Right ventricle myocardium superior (tissue), 1 donor: ENCODE measurements at regions of chr5 and their contacts with region 1.

Region 1: DNA sequence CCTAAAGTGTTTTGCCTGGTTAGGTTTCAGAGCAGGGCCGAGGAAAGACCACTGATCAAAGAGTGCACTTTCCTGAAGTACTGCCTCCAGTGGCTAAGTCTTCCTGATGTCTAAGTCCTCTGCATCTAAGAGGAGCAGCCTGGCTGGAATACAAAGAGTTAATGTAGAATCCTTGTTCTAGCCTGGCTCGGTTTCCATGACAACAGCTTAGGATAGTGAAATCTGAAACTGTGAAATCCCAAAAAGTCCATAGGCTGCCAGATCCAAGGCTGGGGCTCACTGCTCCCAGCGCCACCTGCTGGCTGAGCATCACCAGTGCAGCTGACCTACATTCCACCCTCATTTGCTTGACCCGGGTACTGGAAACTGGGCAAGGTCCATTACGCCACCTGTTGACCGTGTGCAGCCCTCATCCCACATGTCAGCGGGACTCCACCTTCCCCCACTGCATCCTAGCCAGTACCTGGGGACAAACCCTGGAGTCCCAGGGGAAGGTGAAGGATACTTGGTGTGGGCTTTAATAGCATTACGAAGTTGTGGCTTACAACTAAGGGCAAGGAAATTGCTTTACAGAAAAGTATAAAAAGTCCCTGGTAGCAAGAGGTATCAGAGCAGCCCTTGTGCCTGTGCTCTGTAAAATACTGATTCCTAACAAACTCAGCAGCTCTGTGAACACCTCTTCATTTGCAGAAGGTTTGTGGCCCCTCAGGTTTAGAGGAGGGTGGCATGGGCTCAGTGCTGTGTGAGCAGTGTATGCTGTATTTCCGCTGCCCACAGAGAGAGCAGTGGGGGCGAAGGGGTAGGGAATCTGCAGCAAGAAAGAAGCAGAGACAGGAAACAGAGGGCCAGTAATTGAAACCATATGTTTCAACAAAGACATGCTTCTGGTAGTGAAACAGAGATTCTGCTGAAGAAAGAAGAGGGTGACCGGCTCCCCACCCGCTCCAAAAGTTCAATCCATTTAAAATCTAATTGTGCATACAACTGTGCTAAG is 36.0 kb downstream of the PCDHGC5 start:
- DNase-seq: peak; percentile 91
- ATAC-seq: peak; percentile 78

Region 2: GRCh38 chr5:141427783-141428426 is 97.0 kb before region 1 on chr5:
- intact Hi-C with region 1: loop called (anchors 5 kb)
- DNase-seq: no peak
- ATAC-seq: no peak

Region 3: DNA sequence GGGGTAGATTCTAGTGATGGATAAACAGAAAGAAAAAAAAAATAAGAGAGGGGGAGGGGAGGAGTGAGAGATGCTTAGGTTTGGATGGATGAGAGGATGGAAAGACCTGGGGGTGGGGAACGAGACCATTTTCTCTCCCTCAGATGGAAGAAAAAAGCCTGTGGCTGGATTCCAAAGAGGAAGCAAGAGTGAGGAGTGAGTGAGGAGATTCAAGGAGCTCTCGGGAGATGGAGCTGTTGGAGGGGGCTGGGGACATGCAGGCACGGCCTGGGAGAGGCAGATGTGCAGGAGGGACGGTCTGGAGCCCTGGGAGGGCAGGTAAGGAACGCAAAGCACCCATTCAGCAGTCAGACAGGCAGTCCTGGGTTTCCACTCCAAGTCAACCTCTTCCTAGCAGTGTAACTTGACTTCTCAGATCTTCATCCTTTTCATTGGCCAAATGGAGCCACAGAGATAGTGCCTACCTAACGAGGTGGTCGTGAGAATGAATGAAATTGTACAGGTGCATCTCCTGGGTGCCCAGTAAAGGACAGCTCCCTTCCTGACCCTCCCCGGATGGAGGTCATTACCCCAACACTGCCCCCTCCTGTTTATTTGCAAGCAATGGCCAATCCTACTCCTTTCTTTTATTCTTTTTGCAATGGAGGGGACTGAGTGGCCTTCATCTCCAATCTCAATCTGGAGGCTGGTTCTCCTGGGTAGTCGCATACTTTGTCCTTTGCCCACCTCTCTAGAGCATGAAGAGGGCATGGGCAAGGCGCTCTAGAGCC is 301.1 kb after region 1 on chr5:
- intact Hi-C with region 1: no loop called
- DNase-seq: no peak
- ATAC-seq: no peak